ENCODE measurements at regions of chr3 and their contacts with region 1.

Region 1: GRCh38 chr3:194100856-194101390 is 35.0 kb upstream of the HES1 start:
- DNase-seq: no peak
- ATAC-seq: peak; percentile 25
- H3K4me3 ChIP-seq: peak overlapping the region in 2 of 3 experiments; percentile 31 to 46; a peak in 4 of 6 replicates
- H3K27ac ChIP-seq: peak overlapping the region; percentile 55
- H3K4me1 ChIP-seq: peaks cover 80% of the 10 kb centered on the region
- H3K27me3 ChIP-seq: no peaks in the 10 kb centered on the region
- CTCF ChIP-seq: no peak
- EP300 ChIP-seq: no peak
- POLR2A ChIP-seq: no peak
- RAD21 ChIP-seq: no peak

Region 2: GRCh38 chr3:193910886-193911738 is 189.8 kb before region 1 on chr3:
- CTCF ChIA-PET with region 1: no interaction called
- POLR2A ChIA-PET with region 1: no interaction called
- in situ Hi-C with region 1: no loop called
- intact Hi-C with region 1: no loop called
- DNase-seq: no peak
- ATAC-seq: no peak
- H3K4me3 ChIP-seq: no peak overlapping the region
- H3K27ac ChIP-seq: no peak overlapping the region
- H3K4me1 ChIP-seq: peaks cover 9% of the 10 kb centered on the region; the same call in 1 of the 2 replicates
- H3K27me3 ChIP-seq: peaks cover 0 to 3% of the 10 kb centered on the region in 2 experiments; a peak in 2 of 5 replicates
- CTCF ChIP-seq: no peak
- EP300 ChIP-seq: no peak
- POLR2A ChIP-seq: no peak
- RAD21 ChIP-seq: no peak

Region 3: GRCh38 chr3:194070634-194071409 is 30.1 kb before region 1 on chr3:
- CTCF ChIA-PET with region 1: no interaction called
- POLR2A ChIA-PET with region 1: interaction called, 12 read pairs
- in situ Hi-C with region 1: no loop called
- intact Hi-C with region 1: no loop called
- DNase-seq: peak; percentile 47
- ATAC-seq: peak; percentile 67
- H3K4me3 ChIP-seq: peak overlapping the region; percentile 41 to 68 (median 47); a peak in 5 of 6 replicates
- H3K27ac ChIP-seq: peak overlapping the region; percentile 68
- H3K4me1 ChIP-seq: peaks cover 53% of the 10 kb centered on the region
- H3K27me3 ChIP-seq: no peaks in the 10 kb centered on the region; a peak in 1 of 5 replicates
- CTCF ChIP-seq: no peak
- EP300 ChIP-seq: no peak; a peak in 2 of 4 replicates
- POLR2A ChIP-seq: peak in 1 of 2 experiments; percentile 33; a peak in 1 of 4 replicates
- RAD21 ChIP-seq: no peak; the same call in 1 of the 2 replicates

Region 4: DNA sequence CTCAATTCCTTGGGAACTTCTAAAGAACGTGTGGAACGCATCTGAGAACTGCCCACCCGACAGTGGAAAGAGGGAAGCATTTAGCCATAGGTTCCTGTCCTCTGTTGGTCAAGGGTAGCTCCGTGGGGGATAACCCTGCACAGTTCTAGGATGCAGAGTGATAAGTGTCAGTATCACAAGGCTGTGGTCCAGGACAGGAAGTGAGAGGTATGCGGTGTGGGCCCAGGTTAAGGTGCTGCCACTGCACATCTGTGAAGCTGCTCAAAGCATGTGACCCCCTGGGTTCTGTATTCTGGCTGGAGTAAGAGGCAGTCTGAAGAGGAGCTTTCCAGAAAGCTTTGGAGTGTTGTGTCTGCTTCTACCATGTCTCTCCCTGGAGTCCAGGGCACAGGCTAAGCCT is 16.6 kb before region 1 on chr3:
- CTCF ChIA-PET with region 1: no interaction called
- POLR2A ChIA-PET with region 1: interaction called, 15 read pairs
- in situ Hi-C with region 1: no loop called
- intact Hi-C with region 1: no loop called
- DNase-seq: no peak
- ATAC-seq: no peak
- H3K4me3 ChIP-seq: no peak overlapping the region
- H3K27ac ChIP-seq: no peak overlapping the region
- H3K4me1 ChIP-seq: peaks cover 68% of the 10 kb centered on the region
- H3K27me3 ChIP-seq: no peaks in the 10 kb centered on the region; a peak in 1 of 5 replicates
- CTCF ChIP-seq: no peak
- EP300 ChIP-seq: no peak
- POLR2A ChIP-seq: no peak
- RAD21 ChIP-seq: no peak

Region 5: DNA sequence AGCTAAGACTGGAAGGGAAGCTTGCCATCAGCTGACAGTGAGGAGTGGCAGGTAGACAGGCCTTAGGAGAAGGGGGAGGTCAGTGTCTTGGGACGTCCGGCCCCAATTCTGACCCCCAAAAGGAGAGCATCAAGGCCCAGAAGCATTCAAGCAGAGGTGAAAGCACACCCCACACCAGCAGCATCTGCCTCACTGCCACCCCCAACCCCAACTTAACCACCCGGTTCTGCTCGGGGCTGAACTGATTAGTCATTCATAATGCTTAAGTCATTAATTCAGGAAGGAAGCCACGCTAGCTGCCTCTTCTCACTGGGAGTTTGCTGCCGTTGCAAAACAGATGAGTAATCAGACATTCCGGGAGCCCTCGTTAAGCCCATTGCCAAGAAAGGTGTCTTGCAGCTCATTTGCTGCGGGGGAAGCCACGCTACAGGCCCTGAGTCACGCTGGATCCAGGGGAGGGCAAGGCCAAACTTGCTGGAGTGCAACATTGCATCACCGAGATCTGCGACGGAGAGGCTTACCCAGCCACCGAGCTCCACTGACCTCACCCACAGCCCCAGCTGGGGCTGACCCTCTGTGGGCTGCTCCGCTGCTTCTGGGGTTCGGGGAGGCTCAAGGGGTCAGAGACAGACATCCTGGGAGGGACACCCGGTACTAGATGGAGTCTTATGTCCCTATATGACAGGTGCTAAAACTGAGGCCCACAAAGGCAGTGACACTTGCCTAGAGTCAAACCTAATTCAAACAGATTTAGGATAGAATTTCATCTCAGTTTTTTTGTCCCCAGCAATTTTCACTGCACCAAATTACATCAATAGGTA is 11.4 kb before region 1 on chr3:
- CTCF ChIA-PET with region 1: no interaction called
- POLR2A ChIA-PET with region 1: interaction called, 15 read pairs
- in situ Hi-C with region 1: no loop called
- intact Hi-C with region 1: no loop called
- DNase-seq: peak; percentile 71
- ATAC-seq: peak; percentile 89
- H3K4me3 ChIP-seq: peak overlapping the region in 1 of 3 experiments; percentile 36; a peak in 1 of 6 replicates
- H3K27ac ChIP-seq: no peak overlapping the region
- H3K4me1 ChIP-seq: peaks cover 52% of the 10 kb centered on the region
- H3K27me3 ChIP-seq: no peaks in the 10 kb centered on the region; a peak in 1 of 5 replicates
- CTCF ChIP-seq: no peak
- EP300 ChIP-seq: peak in 1 of 2 experiments; percentile 4; a peak in 1 of 4 replicates
- POLR2A ChIP-seq: no peak
- RAD21 ChIP-seq: no peak

Region 6: GRCh38 chr3:194112120-194113106 is 11.5 kb after region 1 on chr3:
- CTCF ChIA-PET with region 1: no interaction called
- POLR2A ChIA-PET with region 1: interaction called, 10 read pairs
- in situ Hi-C with region 1: no loop called
- intact Hi-C with region 1: no loop called
- DNase-seq: peak; percentile 98
- ATAC-seq: peak; percentile 96
- H3K4me3 ChIP-seq: peak overlapping the region in 1 of 3 experiments; percentile 13; a peak in 2 of 6 replicates
- H3K27ac ChIP-seq: peak overlapping the region; percentile 58
- H3K4me1 ChIP-seq: peaks cover 69% of the 10 kb centered on the region
- H3K27me3 ChIP-seq: no peaks in the 10 kb centered on the region
- CTCF ChIP-seq: no peak
- EP300 ChIP-seq: peak in 1 of 2 experiments; percentile 61; a peak in 2 of 4 replicates
- POLR2A ChIP-seq: no peak
- RAD21 ChIP-seq: no peak

Measured in HepG2 (cell line).